Ovary (tissue), 10 donors: ENCODE measurements at regions of chr1 and their contacts with region 1.

Region 1: GRCh38 chr1:219304227-219305226 is 130.8 kb downstream of the LYPLAL1 start:
- DNase-seq: no peak
- H3K4me3 ChIP-seq: no peak overlapping the region
- H3K27ac ChIP-seq: no peak overlapping the region
- H3K4me1 ChIP-seq: no peaks in the 10 kb centered on the region
- H3K27me3 ChIP-seq: no peaks in the 10 kb centered on the region
- CTCF ChIP-seq: no peak
- EP300 ChIP-seq: no peak
- POLR2A ChIP-seq: no peak

Region 2: DNA sequence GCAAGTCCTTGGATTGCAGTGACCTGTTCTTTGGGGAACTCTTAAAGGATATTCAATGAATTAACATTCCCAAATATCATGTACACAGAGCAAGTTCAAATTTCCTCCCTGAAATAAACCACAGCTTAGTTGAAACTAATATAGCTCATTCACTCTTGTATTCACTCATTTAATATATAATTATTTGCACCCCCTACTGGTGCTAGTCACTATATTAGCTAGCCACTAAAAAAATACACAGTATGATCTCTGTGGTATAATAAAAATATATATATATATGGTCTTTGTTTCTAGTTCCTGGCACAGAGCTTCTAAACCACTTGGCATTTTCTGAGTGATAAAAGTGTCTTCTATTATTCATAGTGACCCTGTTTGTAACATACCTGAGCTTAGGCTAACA is 308.2 kb before region 1 on chr1:
- intact Hi-C with region 1: no loop called
- DNase-seq: no peak
- H3K4me3 ChIP-seq: no peak overlapping the region
- H3K27ac ChIP-seq: no peak overlapping the region
- H3K4me1 ChIP-seq: no peaks in the 10 kb centered on the region
- H3K27me3 ChIP-seq: no peaks in the 10 kb centered on the region
- CTCF ChIP-seq: no peak
- EP300 ChIP-seq: no peak
- POLR2A ChIP-seq: no peak

Region 3: DNA sequence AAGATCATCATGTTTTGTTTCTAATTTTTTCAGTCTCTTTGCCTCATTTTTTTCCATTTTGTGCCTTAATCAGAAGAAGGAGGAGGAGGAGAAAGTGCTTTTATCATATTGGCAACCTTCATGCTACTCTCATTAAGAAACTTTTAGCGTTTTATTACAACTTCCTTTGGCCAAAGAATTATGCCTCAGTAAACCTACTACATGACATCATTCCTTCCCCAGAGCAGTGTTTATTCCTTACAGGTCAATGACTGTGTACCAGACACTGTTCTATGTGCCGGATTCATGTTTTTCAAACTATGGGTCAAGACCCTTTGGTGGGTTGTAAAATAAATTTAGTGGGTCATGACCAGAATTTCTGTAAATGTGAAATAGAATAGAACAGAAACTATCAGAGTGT is 513.4 kb after region 1 on chr1:
- intact Hi-C with region 1: loop called in 1 of 4 experiments (anchors 5 kb)
- DNase-seq: no peak
- H3K4me3 ChIP-seq: no peak overlapping the region
- H3K27ac ChIP-seq: no peak overlapping the region
- H3K4me1 ChIP-seq: no peaks in the 10 kb centered on the region
- H3K27me3 ChIP-seq: no peaks in the 10 kb centered on the region
- CTCF ChIP-seq: no peak
- EP300 ChIP-seq: no peak
- POLR2A ChIP-seq: no peak

Region 4: GRCh38 chr1:219917851-219918466 is 613.4 kb after region 1 on chr1:
- intact Hi-C with region 1: no loop called
- DNase-seq: no peak
- H3K4me3 ChIP-seq: no peak overlapping the region
- H3K27ac ChIP-seq: no peak overlapping the region
- H3K4me1 ChIP-seq: no peaks in the 10 kb centered on the region
- H3K27me3 ChIP-seq: no peaks in the 10 kb centered on the region
- CTCF ChIP-seq: no peak
- EP300 ChIP-seq: no peak
- POLR2A ChIP-seq: no peak